ENCODE measurements at regions of chr6 and their contacts with region 1.

Region 1: DNA sequence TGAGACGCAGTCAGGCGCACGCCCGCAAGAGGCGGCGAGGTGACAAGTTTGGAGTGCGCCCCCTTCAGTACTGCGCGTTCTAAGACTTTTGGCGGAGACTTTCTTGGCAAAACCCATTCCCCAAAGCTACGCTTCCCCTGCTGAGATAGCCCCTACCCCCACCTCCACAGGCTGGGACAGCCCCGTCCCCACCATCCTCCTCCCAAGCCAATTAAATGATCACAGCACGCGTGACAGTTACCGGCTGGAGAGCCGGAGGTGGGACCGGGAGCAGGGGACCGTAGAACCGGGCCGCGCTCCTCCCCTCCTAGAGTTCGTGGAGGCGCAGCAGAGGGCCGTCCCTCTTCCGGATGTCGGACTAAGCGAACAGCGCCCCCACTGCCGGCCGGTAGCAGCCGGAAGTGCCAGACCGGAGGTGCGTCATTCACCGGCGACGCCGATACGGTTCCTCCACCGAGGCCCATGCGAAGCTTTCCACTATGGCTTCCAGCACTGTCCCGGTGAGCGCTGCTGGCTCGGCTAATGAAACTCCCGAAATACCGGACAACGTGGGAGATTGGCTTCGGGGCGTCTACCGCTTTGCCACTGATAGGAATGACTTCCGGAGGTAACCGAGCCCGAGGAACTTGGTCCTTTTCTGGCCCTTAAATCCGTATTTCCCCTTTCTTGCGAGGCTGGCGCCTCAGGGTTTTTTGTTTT is at the start of gene TOMM6:
- DNase-seq: peak; percentile 92 to 93
- ATAC-seq: peak; percentile 91 to 92
- H3K4me3 ChIP-seq: peak within 1 kb of the TSS; percentile 77 to 97 (median 88)
- H3K27ac ChIP-seq: peak within 1 kb of the TSS; percentile 92 to 96 (median 94)
- H3K4me1 ChIP-seq: peaks cover 21 to 24% of the 10 kb centered on the region in 2 donors
- H3K27me3 ChIP-seq: no peaks in the 10 kb centered on the region
- CTCF ChIP-seq: peak; percentile 94 to 97 (median 95)
- POLR2A ChIP-seq: peak; percentile 76 to 77
- total RNA-seq, gene TOMM6: 152 to 186 (median 166) TPM

Region 2: GRCh38 chr6:41705996-41706835 is 81.2 kb before region 1 on chr6:
- in situ Hi-C with region 1: no loop called
- intact Hi-C with region 1: loop called (anchors 10 kb)
- DNase-seq: peak; percentile 88 to 93
- ATAC-seq: peak; percentile 79 to 83
- H3K4me3 ChIP-seq: peak overlapping the region in 3 of 4 donors; percentile 13 to 30 (median 28)
- H3K27ac ChIP-seq: peak overlapping the region; percentile 94 to 98 (median 96)
- H3K4me1 ChIP-seq: peaks cover 90 to 93% of the 10 kb centered on the region in 2 donors
- H3K27me3 ChIP-seq: no peaks in the 10 kb centered on the region
- CTCF ChIP-seq: peak; percentile 89 to 98 (median 94)
- POLR2A ChIP-seq: peak; percentile 54 to 70

Region 3: DNA sequence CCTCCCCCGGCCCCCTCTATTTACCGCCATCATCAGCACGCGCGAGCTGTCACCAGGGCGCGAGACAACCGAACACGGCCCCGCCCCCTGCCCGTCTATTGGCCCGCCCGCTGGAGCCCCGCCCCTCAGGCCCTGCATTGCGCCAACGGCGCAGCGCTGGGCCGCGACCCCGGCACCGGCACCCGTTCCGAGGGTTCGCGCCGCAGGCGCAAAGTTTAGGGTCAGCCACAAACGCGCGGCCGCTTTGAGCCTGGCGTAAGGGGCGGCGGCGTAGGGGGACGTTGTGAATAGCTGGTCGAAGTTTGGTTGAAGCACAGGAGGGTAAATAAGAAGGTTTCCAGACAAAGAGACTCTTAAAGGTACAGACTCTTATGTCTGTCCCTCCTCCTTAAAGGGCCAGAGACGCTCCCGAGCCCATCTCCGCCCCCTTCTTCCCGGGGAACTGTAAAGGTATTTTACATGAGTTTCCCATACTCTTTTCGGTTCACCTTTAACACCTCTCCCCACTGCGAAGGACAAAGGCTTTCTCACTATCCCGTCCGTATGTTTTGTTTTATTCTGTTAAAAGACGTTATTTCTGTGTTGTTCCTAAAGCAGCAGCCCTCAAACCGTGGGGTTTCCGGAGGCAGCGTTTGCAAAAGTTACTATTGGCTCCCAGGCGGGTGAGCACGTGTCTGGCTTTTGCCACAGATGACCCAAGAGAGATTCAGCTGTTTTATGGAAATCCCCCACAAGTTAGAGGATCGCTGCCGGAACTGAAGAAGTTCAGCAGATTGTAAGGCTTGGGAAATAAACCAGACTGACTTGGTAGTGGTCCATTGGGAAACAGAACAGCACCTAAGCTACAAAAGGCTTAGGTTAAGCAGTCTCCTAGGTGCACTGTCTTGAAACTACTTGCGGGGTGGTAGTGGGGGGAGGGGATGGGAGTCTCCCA is 108.2 kb after region 1 on chr6 and contains the start of gene USP49:
- in situ Hi-C with region 1: loop called in 1 of 4 experiments (anchors 10 kb)
- intact Hi-C with region 1: loop called (anchors 1 kb)
- DNase-seq: peak; percentile 83 to 84
- ATAC-seq: peak; percentile 96 to 97
- H3K4me3 ChIP-seq: peak within 1 kb of the TSS; percentile 69 to 91 (median 76)
- H3K27ac ChIP-seq: peak within 1 kb of the TSS; percentile 84 to 91 (median 86)
- H3K4me1 ChIP-seq: peaks cover 8 to 22% of the 10 kb centered on the region in 2 donors
- H3K27me3 ChIP-seq: no peaks in the 10 kb centered on the region
- CTCF ChIP-seq: no peak
- POLR2A ChIP-seq: peak in 1 of 2 donors; percentile 41
- total RNA-seq, gene USP49: 0.27 to 2.8 (median 1.1) TPM

Region 4: GRCh38 chr6:41920921-41921711 is 133.7 kb after region 1 on chr6 and contains the starts of genes BYSL and MED20:
- in situ Hi-C with region 1: loop called in 3 of 4 experiments (anchors 10 kb)
- intact Hi-C with region 1: loop called (anchors 1 kb)
- DNase-seq: peak; percentile 88 to 89
- ATAC-seq: peak; percentile 98 to 99
- H3K4me3 ChIP-seq: peak within 1 kb of the TSS; percentile 75 to 97 (median 86)
- H3K27ac ChIP-seq: peak within 1 kb of the TSS; percentile 93 to 98 (median 96)
- H3K4me1 ChIP-seq: peaks cover 29 to 30% of the 10 kb centered on the region in 2 donors
- H3K27me3 ChIP-seq: no peaks in the 10 kb centered on the region
- CTCF ChIP-seq: peak; percentile 98 to 100 (median 98)
- POLR2A ChIP-seq: peak; percentile 71 to 85
- total RNA-seq, gene BYSL: 8.0 to 16.6 (median 12.9) TPM
- total RNA-seq, gene MED20: 11.5 to 16.5 (median 12.1) TPM

Region 5: GRCh38 chr6:42043787-42044475 is 256.6 kb after region 1 on chr6:
- in situ Hi-C with region 1: loop called (anchors 5 to 10 kb)
- intact Hi-C with region 1: no loop called
- DNase-seq: peak; percentile 55 to 76
- ATAC-seq: peak; percentile 76 to 81
- H3K4me3 ChIP-seq: peak overlapping the region in 1 of 4 donors; percentile 3
- H3K27ac ChIP-seq: peak overlapping the region in 3 of 4 donors; percentile 89 to 94 (median 93)
- H3K4me1 ChIP-seq: peaks cover 9 to 41% of the 10 kb centered on the region in 2 donors
- H3K27me3 ChIP-seq: peaks cover 0 to 7% (median 0%) of the 10 kb centered on the region in 3 donors
- CTCF ChIP-seq: peak; percentile 90 to 98 (median 96)
- POLR2A ChIP-seq: no peak

Measured in gastrocnemius medialis (tissue), 4 donors.